IMR-90 (cell line): ENCODE measurements at regions of chrX and their contacts with region 1.

Region 1: GRCh38 chrX:74421036-74421739 is at the start of gene SLC16A2:
- DNase-seq: peak; percentile 79
- ATAC-seq: peak; percentile 54
- H3K4me3 ChIP-seq: peak within 1 kb of the TSS; percentile 58
- H3K27ac ChIP-seq: peak within 1 kb of the TSS; percentile 94
- H3K4me1 ChIP-seq: peaks cover 4% of the 10 kb centered on the region
- H3K27me3 ChIP-seq: no peaks in the 10 kb centered on the region
- CTCF ChIP-seq: no peak
- POLR2A ChIP-seq: no peak
- RAD21 ChIP-seq: no peak
- total RNA-seq, gene SLC16A2: 5.3 and 6.1 TPM in 2 replicates

Region 2: DNA sequence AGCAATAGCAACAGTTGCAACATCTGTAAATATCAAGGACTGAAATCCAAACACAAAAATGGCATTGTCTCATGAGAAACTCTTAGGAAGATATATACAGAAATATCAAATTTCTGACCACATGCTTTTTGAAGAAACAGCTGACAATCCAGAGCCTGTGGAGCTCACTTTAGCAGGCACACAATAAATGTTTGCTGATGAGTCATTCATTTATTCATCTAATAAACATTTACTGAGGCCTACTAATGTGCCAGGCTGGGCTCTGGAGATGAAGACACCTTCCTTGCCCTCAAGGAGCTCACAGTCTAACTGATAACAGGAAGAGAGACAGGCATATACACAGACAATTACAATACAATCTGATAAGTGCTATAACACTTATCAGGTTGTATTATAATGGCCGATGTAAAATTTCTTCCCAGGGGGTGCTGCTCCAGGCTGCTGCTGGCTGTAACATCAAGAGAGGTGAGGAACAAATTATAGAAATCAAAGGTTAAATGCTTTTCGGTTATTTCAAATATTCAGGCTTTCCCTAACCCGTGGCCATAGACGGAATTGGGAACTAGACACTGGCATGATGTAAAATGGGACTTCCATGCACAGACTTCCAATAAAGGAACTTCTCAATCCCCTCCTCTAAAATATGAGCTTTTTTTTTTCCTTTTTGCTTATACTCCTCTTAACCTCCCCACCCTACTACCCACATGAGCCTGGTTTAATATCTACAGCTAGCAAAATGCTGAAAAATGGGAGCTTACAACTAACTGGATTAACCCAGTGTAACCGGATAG is 134.0 kb before region 1 on chrX:
- CTCF ChIA-PET with region 1: no interaction called
- POLR2A ChIA-PET with region 1: no interaction called
- dilution Hi-C with region 1: no loop called
- in situ Hi-C with region 1: no loop called
- intact Hi-C with region 1: loop called (anchors 2 kb)
- DNase-seq: peak; percentile 85
- ATAC-seq: peak; percentile 51; the same call in 1 of the 2 replicates
- H3K4me3 ChIP-seq: no peak overlapping the region
- H3K27ac ChIP-seq: peak overlapping the region; percentile 51; the same call in 1 of the 2 replicates
- H3K4me1 ChIP-seq: peaks cover 4% of the 10 kb centered on the region; the same call in 1 of the 2 replicates
- H3K27me3 ChIP-seq: no peaks in the 10 kb centered on the region
- CTCF ChIP-seq: no peak
- POLR2A ChIP-seq: no peak
- RAD21 ChIP-seq: no peak

Region 3: DNA sequence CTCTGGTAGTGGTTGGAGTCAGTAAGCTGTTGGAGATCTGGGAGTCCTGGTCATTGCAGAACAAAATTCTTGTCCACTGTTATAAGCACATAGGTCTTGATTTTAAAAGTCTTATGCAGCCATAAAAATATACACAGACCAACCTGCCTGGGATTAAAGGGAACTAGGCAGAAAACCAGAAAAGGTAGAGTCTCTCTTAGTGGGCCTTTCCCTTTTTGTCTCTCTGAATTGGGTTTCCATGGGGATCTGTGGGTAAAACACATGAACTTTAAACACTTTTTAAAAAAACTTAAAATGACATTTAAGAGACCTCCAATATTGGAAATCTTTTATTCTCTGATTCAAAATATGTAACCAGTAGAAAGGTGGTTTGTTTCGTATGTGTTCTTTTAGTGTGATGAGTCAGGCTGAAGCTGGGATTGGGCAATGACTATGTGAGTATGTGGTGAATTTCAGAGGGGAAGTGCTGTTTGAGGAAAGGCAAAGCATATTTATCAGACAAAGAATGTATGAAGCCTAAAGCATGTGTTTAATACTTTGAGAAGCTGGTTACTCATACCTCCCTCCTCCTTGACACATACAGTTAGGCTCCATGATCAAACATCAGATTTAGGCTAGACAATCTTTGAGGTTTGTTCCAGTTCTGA is 29.7 kb after region 1 on chrX:
- CTCF ChIA-PET with region 1: no interaction called
- POLR2A ChIA-PET with region 1: interaction called, 3 read pairs
- dilution Hi-C with region 1: no loop called
- in situ Hi-C with region 1: no loop called
- intact Hi-C with region 1: loop called (anchors 2 kb)
- DNase-seq: peak; percentile 94
- ATAC-seq: peak; percentile 91
- H3K4me3 ChIP-seq: no peak overlapping the region
- H3K27ac ChIP-seq: peak overlapping the region; percentile 79
- H3K4me1 ChIP-seq: peaks cover 6% of the 10 kb centered on the region
- H3K27me3 ChIP-seq: peaks cover 2% of the 10 kb centered on the region; the same call in 1 of the 2 replicates
- CTCF ChIP-seq: no peak
- POLR2A ChIP-seq: no peak
- RAD21 ChIP-seq: no peak

Region 4: DNA sequence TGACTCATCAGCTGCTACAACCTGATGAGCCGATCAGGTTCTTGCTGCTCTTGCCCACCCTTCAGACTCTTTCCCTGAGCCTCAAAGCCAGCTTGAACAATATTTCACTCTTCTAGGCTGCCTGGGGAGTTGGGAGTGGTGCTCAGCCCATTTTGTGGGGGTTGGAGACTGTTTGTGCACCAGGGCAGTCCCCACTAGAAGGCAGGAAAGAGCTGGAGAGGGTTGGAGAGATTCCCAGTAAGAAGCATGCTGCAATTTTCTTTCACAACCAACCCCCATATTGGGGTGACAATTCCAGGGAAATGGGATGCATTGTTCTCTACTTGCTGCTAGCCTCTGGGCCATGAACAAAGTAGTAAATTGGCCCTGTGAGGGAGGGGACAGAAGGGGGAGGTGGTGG is 44.2 kb after region 1 on chrX:
- CTCF ChIA-PET with region 1: no interaction called
- POLR2A ChIA-PET with region 1: no interaction called
- dilution Hi-C with region 1: no loop called
- in situ Hi-C with region 1: no loop called
- intact Hi-C with region 1: no loop called
- DNase-seq: peak; percentile 9
- ATAC-seq: peak; percentile 53
- H3K4me3 ChIP-seq: no peak overlapping the region
- H3K27ac ChIP-seq: no peak overlapping the region
- H3K4me1 ChIP-seq: no peaks in the 10 kb centered on the region
- H3K27me3 ChIP-seq: no peaks in the 10 kb centered on the region; the same call in 1 of the 2 replicates
- CTCF ChIP-seq: peak; percentile 30; the same call in 1 of the 2 replicates
- POLR2A ChIP-seq: no peak
- RAD21 ChIP-seq: no peak

Region 5: DNA sequence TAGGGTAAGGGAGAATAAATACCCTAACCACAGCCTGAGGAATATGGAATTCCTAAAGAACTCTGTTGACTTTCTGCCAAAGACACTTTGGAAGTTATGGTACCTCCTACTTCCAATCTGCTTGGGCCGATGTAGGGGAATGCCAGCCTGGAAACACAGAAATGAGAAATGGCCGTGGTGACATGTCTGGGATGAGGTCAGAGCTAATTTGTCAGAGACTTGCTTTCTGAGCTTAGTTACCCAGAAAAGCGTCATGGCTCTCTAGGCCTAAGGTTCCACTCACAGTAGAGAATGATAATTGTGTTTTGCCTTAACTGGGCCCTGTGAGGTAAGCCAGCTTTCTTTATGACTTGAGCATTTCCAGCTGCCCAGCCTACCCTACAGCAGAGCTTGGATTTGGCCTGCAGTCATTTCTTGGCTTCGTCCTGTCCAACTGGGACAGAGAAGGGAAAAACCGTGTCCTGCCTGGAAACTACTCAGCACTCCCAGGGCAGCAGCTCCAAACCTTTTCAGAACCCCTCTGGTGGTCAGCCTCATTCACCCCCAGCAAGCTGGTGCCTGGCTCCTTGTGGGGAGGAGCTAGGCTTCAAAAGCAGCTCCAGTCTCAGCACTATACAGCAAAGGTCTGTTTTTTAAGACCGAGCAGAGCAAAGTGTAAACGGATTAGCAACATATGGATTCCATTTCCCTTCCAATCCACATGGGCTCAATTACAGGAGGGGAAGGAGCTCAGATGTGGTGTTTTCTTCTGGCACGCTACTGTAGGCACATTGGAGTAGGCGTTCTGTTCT is 101.0 kb after region 1 on chrX:
- CTCF ChIA-PET with region 1: no interaction called
- POLR2A ChIA-PET with region 1: no interaction called
- dilution Hi-C with region 1: no loop called
- in situ Hi-C with region 1: no loop called
- intact Hi-C with region 1: loop called (anchors 5 kb)
- DNase-seq: peak; percentile 64
- ATAC-seq: peak; percentile 54
- H3K4me3 ChIP-seq: no peak overlapping the region
- H3K27ac ChIP-seq: peak overlapping the region; percentile 71; the same call in 1 of the 2 replicates
- H3K4me1 ChIP-seq: peaks cover 9% of the 10 kb centered on the region
- H3K27me3 ChIP-seq: peaks cover 2% of the 10 kb centered on the region; the same call in 1 of the 2 replicates
- CTCF ChIP-seq: no peak
- POLR2A ChIP-seq: no peak
- RAD21 ChIP-seq: no peak

Region 6: DNA sequence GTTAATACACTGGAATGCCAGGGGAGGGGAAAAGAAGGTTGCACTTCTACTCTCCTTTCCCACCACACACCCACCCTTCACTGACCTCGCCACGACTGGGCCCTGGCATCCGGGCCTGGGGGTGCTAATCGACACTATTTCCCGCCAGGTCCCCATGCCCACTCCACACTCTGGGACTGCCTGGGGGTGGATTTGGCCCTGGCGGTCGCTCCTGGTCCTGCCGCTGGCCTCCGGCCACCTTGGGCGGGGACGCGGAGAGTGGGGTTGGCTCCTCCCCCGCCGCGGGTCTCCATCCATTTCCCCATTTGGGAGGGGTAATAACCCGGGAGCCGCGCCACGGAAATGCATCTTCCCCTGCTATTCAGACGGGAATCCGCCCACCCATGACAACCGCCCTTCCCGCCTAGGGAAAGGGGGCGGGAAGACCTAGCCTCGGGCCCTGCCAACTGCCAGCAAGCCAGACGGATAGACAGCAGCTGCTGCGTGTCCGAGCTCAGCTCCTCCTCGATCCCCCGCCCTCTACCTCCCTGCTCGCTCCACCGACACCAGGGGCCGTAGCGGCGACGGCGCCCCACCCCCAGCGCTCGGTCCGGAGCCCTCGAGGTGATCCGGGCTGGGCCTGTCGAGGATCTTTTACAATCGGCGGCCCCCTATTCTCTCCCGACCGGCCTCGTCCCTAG is 115.1 kb after region 1 on chrX:
- CTCF ChIA-PET with region 1: no interaction called
- POLR2A ChIA-PET with region 1: no interaction called
- dilution Hi-C with region 1: no loop called
- in situ Hi-C with region 1: no loop called
- intact Hi-C with region 1: loop called (anchors 1 kb)
- DNase-seq: peak; percentile 83
- ATAC-seq: peak; percentile 73
- H3K4me3 ChIP-seq: peak overlapping the region; percentile 38
- H3K27ac ChIP-seq: peak overlapping the region; percentile 83
- H3K4me1 ChIP-seq: peaks cover 6% of the 10 kb centered on the region; the same call in 1 of the 2 replicates
- H3K27me3 ChIP-seq: no peaks in the 10 kb centered on the region
- CTCF ChIP-seq: peak; percentile 37
- POLR2A ChIP-seq: 0 out of 2 replicates have a peak, but pooled peaks have one; percentile 16
- RAD21 ChIP-seq: no peak

Region 7: DNA sequence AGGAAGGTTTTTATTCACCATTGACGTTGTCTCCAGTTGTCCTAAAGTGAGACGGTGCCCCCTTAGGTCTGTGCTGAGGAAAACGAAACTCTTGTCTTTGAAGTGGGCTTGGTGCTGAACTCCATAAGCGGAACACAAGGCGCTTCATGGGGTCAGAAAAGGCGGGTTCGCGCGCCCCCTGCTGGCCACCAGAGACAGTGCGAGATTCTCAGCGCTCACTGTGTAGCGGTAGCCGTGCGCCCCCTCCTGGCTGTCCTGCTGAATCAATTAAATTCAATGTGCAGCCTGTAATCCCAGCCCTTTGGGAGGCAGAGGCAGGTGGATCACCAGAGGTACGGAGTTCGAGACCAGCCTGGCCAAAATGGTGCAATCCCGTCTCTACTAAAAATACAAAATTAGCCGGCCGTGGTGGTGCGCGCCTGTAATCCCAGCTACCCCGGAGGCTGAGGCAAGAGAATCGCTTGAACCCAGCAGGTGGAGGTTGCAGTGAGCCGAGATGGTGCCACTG is 129.2 kb after region 1 on chrX:
- CTCF ChIA-PET with region 1: no interaction called
- POLR2A ChIA-PET with region 1: no interaction called
- dilution Hi-C with region 1: no loop called
- in situ Hi-C with region 1: no loop called
- intact Hi-C with region 1: loop called (anchors 5 kb)
- DNase-seq: peak; percentile 67
- ATAC-seq: peak; percentile 97
- H3K4me3 ChIP-seq: peak overlapping the region; percentile 38; the same call in 1 of the 2 replicates
- H3K27ac ChIP-seq: no peak overlapping the region
- H3K4me1 ChIP-seq: no peaks in the 10 kb centered on the region
- H3K27me3 ChIP-seq: no peaks in the 10 kb centered on the region; the same call in 1 of the 2 replicates
- CTCF ChIP-seq: peak; percentile 99
- POLR2A ChIP-seq: no peak
- RAD21 ChIP-seq: peak; percentile 95

Region 8: DNA sequence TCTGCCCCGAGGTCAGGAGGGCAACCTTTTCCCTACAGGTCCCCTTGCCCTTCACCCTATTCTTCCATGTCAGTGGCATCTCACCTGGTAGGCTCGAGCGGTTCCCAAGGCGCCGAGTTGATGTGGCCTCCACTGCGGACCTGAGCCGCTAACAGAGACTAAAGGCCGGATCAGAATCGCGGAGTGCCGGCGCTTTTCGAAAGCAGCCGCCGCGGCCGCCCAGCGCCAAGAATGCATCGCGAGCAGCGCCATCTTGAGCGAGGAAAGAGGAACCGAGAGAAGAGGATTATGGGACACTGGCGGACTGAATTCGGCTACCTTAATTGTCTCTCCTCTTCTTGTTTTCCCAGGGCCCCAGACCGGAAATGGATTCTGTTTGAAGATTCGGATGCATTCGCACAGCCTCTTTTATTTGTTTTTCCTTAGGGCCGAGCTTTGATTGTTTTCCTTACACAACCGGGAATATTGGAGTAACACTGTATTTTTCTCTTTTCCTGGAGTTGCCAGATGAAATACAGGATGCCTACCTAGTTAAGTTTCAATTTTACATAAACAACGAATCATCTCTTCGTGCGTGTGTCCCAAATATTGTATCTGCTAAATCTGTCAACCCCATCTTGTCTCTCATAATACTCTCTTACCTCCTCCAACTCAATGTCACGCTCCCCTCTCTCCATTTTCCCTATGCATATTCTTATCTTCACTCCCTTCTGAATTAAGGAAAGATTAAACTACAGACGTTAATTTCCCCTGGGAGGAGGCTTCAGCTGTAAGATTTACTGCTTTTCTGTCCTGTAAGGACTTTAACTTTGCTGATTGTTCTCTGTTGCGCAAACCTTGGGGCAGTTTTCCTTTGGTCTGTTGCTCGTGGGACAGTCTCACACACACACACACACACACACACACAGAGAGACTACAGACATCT is 735.1 kb after region 1 on chrX and contains the start of gene ABCB7:
- CTCF ChIA-PET with region 1: no interaction called
- POLR2A ChIA-PET with region 1: no interaction called
- dilution Hi-C with region 1: no loop called
- in situ Hi-C with region 1: no loop called
- intact Hi-C with region 1: no loop called
- DNase-seq: peak; percentile 67
- ATAC-seq: peak; percentile 98
- H3K4me3 ChIP-seq: peak within 1 kb of the TSS; percentile 74
- H3K27ac ChIP-seq: peak within 1 kb of the TSS; percentile 81
- H3K4me1 ChIP-seq: no peaks in the 10 kb centered on the region
- H3K27me3 ChIP-seq: no peaks in the 10 kb centered on the region
- CTCF ChIP-seq: peak; percentile 19; the same call in 1 of the 2 replicates
- POLR2A ChIP-seq: no peak
- RAD21 ChIP-seq: no peak
- total RNA-seq, gene ABCB7: 15.8 and 17.5 TPM in 2 replicates